ENCODE measurements at regions of chr13 and their contacts with region 1.

Region 1: DNA sequence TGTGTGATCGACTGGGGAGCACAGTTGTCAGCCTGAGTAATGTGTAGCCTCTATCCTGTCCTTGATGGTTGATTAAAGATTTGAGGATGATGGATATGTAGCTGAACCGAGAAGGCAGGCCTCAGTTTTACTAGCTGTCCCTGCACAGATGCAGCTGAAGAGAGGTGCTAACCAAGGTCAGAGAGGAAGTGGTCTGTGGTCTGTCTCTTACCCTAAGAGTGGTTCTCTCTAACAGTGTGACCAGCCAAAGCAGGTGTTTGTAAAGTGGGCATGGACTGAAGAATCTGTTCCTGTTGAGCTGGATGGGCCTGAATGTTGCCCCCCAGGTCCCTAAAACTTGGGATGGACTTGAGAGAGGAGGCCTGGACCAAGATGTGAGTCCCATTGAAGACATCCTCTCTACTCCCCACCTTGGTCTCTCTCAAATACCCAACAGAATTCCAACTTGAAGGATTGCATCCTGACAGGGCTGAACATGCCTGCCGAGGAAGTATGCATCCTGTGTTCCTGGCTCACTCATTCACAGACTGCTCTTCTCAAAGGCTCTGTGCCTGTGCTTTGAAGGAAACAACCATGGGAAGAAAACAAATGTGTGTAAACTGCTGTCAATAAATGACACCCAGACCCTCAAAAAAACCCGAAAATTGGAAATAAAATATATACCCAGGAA is 223.8 kb downstream of the MAB21L1 start:
- DNase-seq: no peak
- H3K4me3 ChIP-seq: no peak overlapping the region
- H3K27ac ChIP-seq: no peak overlapping the region
- H3K4me1 ChIP-seq: no peaks in the 10 kb centered on the region
- H3K27me3 ChIP-seq: no peaks in the 10 kb centered on the region
- CTCF ChIP-seq: no peak
- EP300 ChIP-seq: no peak
- POLR2A ChIP-seq: no peak

Region 2: GRCh38 chr13:35332134-35332533 is 79.5 kb after region 1 on chr13:
- intact Hi-C with region 1: loop called in 1 of 4 experiments (anchors 5 kb)
- DNase-seq: no peak
- H3K4me3 ChIP-seq: no peak overlapping the region
- H3K27ac ChIP-seq: no peak overlapping the region
- H3K4me1 ChIP-seq: no peaks in the 10 kb centered on the region
- H3K27me3 ChIP-seq: no peaks in the 10 kb centered on the region
- CTCF ChIP-seq: no peak
- EP300 ChIP-seq: no peak
- POLR2A ChIP-seq: no peak